ENCODE measurements at regions of chr2 and their contacts with region 1.

Region 1: GRCh38 chr2:72887754-72888437 is 688 bp downstream of the SPR start:
- DNase-seq: peak; percentile 50 to 73 (median 69)
- H3K4me3 ChIP-seq: peak overlapping the region; percentile 31 to 75 (median 64)
- H3K27ac ChIP-seq: no peak overlapping the region
- H3K4me1 ChIP-seq: peaks cover 0 to 17% (median 16%) of the 10 kb centered on the region in 4 experiments
- H3K27me3 ChIP-seq: peaks cover 11 to 44% (median 27%) of the 10 kb centered on the region in 5 experiments

Region 2: DNA sequence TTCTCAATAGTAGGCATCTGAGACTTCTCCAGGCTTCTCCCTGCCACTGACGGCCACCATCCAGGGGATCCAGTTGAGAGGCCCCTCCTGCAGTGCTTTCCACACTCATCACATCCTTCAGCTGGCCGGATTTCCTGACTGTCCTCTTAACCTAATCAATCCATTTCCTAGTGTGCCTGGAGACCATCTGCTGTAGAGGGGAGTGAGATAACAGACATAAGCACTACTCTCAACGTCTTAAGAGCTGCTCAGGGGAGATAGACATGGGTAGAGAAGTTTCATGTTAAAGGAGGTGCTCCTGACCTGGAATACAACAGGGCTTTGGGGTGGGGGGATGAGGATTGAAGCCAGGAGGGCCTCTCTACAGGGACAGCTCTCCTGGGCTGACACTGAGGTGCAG is 13.5 kb after region 1 on chr2:
- CTCF ChIA-PET with region 1: interaction called, 13 read pairs
- POLR2A ChIA-PET with region 1: no interaction called
- DNase-seq: peak in 2 of 3 donors; percentile 18 to 57
- H3K4me3 ChIP-seq: no peak overlapping the region
- H3K27ac ChIP-seq: no peak overlapping the region
- H3K4me1 ChIP-seq: no peaks in the 10 kb centered on the region
- H3K27me3 ChIP-seq: peaks cover 0 to 66% (median 21%) of the 10 kb centered on the region in 5 experiments

Region 3: GRCh38 chr2:72934683-72935610 is 47.1 kb after region 1 on chr2:
- CTCF ChIA-PET with region 1: interaction called, 20 read pairs
- POLR2A ChIA-PET with region 1: no interaction called
- DNase-seq: no peak
- H3K4me3 ChIP-seq: no peak overlapping the region
- H3K27ac ChIP-seq: no peak overlapping the region
- H3K4me1 ChIP-seq: no peaks in the 10 kb centered on the region
- H3K27me3 ChIP-seq: peaks cover 0 to 28% (median 3%) of the 10 kb centered on the region in 5 experiments

Region 4: DNA sequence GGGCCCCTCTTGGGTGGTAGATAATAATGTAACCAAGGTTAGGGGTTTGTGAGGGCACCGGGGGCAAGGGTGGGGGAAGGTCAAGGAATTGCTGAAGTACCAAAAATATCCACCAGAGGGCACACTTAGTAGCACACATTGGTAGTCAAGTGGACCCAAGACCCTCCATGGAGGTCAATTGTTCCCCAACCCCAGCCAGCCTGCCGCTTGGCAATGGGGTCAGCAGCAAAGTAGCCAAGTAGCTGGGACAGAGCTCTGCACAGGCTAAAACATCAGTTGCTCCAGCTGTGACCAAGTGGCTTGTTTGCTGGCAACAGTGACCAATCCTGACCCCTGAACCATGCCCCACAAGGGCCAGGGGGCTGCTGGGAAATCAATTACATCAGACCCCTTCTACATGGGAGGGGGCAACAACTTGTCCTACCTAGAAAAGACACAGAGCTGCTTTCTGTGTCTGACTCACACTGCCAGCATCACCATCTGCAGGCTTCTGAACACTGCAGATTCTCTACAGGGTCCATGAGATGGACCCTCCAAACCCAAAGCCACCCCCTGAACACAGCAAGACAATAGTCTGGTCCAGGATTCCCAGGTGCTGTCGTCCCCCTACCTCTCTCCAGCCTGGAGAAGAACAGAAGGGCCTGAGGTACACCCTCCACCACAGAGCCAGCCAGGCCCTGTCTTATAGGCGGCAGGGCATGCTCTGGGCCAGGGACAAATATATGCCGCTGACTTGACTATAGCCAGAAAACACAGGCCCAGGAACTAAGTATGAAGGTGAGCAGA is 105.4 kb after region 1 on chr2:
- CTCF ChIA-PET with region 1: interaction called, 10 read pairs
- POLR2A ChIA-PET with region 1: no interaction called
- DNase-seq: peak; percentile 46 to 63 (median 47)
- H3K4me3 ChIP-seq: no peak overlapping the region
- H3K27ac ChIP-seq: no peak overlapping the region
- H3K4me1 ChIP-seq: no peaks in the 10 kb centered on the region
- H3K27me3 ChIP-seq: no peaks in the 10 kb centered on the region

Region 5: GRCh38 chr2:73163483-73164367 is 275.8 kb after region 1 on chr2:
- CTCF ChIA-PET with region 1: interaction called, 21 read pairs
- POLR2A ChIA-PET with region 1: no interaction called
- DNase-seq: peak; percentile 64 to 81 (median 74)
- H3K4me3 ChIP-seq: no peak overlapping the region
- H3K27ac ChIP-seq: no peak overlapping the region
- H3K4me1 ChIP-seq: no peaks in the 10 kb centered on the region
- H3K27me3 ChIP-seq: no peaks in the 10 kb centered on the region

Measured in common myeloid progenitor, CD34-positive (primary cell).